A549 (cell line): ENCODE measurements at regions of chr7 and their contacts with region 1.

Region 1: GRCh38 chr7:74401137-74401859 is 52.4 kb upstream of the GTF2IRD1 start:
- DNase-seq: peak; percentile 66 to 72
- ATAC-seq: peak; percentile 74 to 87
- H3K4me3 ChIP-seq: no peak overlapping the region
- H3K27ac ChIP-seq: no peak overlapping the region
- H3K4me1 ChIP-seq: no peaks in the 10 kb centered on the region
- CTCF ChIP-seq: peak; percentile 92
- EP300 ChIP-seq: no peak
- POLR2A ChIP-seq: no peak
- RAD21 ChIP-seq: peak; percentile 94 to 96

Region 2: GRCh38 chr7:74068393-74069085 is 332.8 kb before region 1 on chr7:
- CTCF ChIA-PET with region 1: interaction called, 45 read pairs
- POLR2A ChIA-PET with region 1: interaction called, 6 read pairs
- DNase-seq: no peak
- ATAC-seq: no peak
- H3K4me3 ChIP-seq: no peak overlapping the region
- H3K27ac ChIP-seq: no peak overlapping the region
- H3K4me1 ChIP-seq: no peaks in the 10 kb centered on the region
- CTCF ChIP-seq: no peak
- EP300 ChIP-seq: no peak
- POLR2A ChIP-seq: no peak
- RAD21 ChIP-seq: no peak

Region 3: GRCh38 chr7:74231232-74231590 is 170.1 kb before region 1 on chr7:
- CTCF ChIA-PET with region 1: interaction called, 10 read pairs
- POLR2A ChIA-PET with region 1: no interaction called
- DNase-seq: no peak
- ATAC-seq: no peak
- H3K4me3 ChIP-seq: no peak overlapping the region
- H3K27ac ChIP-seq: no peak overlapping the region
- H3K4me1 ChIP-seq: no peaks in the 10 kb centered on the region
- CTCF ChIP-seq: no peak
- EP300 ChIP-seq: no peak
- POLR2A ChIP-seq: no peak
- RAD21 ChIP-seq: no peak

Region 4: DNA sequence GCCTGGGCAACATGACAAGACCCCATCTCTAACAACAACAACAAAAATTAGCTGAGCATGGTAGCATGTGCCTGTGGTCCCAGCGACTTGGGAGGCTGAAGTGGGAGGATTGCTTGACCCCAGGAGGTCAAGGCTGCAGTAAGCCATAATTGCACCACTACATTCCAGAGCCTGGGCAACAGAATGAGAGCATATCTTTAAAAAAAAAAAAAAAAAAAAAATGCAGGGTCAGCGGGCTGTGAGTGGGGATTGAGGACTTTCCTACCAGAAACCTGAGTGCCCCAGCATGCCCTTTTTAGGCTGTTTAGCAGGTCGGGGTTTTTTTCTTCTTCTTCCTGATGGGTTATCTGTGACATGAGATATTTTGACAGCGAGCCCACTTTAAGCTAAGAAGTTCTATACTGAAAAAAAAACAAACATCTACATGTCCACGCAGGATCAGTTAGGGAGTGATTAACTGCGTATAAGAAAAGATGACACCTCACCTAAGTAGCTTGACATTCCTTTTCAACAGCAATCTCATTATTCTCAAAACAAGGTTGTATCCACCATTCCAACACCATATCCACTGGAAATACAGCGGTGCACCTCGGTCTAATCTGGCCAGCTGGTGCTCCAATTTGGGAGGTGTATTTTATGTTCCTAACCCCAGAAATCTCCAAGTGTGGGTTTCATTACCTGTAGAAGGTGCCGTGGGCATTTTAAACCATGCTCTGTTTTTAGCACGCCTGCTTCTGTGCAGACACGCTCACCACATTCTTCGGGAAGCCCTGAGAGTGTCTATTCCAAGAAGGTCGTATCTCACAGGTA is 133.3 kb before region 1 on chr7:
- CTCF ChIA-PET with region 1: interaction called, 11 read pairs
- POLR2A ChIA-PET with region 1: no interaction called
- DNase-seq: no peak
- ATAC-seq: no peak
- H3K4me3 ChIP-seq: no peak overlapping the region
- H3K27ac ChIP-seq: no peak overlapping the region
- H3K4me1 ChIP-seq: peaks cover 14% of the 10 kb centered on the region
- CTCF ChIP-seq: no peak
- EP300 ChIP-seq: no peak
- POLR2A ChIP-seq: no peak
- RAD21 ChIP-seq: no peak

Region 5: GRCh38 chr7:74306730-74307469 is 94.4 kb before region 1 on chr7:
- CTCF ChIA-PET with region 1: interaction called, 10 read pairs
- POLR2A ChIA-PET with region 1: no interaction called
- DNase-seq: no peak
- ATAC-seq: peak; percentile 60 to 71
- H3K4me3 ChIP-seq: no peak overlapping the region
- H3K27ac ChIP-seq: peak overlapping the region; percentile 34 to 77; a peak in 4 of 6 replicates
- H3K4me1 ChIP-seq: peaks cover 27% of the 10 kb centered on the region
- CTCF ChIP-seq: no peak
- EP300 ChIP-seq: no peak
- POLR2A ChIP-seq: no peak
- RAD21 ChIP-seq: no peak

Region 6: DNA sequence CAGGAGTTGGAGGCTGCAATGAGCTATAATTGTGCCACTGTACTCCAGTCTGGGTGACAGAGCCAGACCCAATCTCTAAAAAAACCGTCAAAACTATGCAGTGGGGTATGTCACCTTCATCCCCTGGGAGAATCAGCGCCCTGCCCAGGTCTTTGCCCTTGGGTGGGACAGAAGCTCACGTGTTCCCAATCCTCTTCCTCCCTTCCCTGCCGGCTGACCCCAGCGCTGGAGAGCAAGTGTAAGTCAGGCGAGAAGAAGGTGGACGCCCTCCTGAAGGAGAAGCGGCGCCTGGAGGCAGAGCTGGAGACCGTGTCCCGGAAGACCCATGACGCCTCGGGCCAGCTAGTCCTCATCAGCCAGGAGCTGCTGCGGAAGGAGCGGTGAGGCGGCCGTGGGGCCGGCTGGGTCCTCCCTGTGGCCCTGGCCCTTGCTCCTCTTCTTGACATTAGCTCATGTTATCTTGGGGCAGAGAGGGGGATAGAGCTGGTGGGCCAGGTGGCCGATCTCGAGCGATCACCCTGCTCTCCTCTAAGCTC is 12.3 kb before region 1 on chr7:
- CTCF ChIA-PET with region 1: interaction called, 51 read pairs
- POLR2A ChIA-PET with region 1: no interaction called
- DNase-seq: no peak
- ATAC-seq: no peak
- H3K4me3 ChIP-seq: no peak overlapping the region
- H3K27ac ChIP-seq: no peak overlapping the region
- H3K4me1 ChIP-seq: 0 out of 3 replicates have a peak, but pooled peaks cover 6% of the 10 kb centered on the region
- CTCF ChIP-seq: no peak
- EP300 ChIP-seq: no peak
- POLR2A ChIP-seq: no peak
- RAD21 ChIP-seq: no peak

Region 7: DNA sequence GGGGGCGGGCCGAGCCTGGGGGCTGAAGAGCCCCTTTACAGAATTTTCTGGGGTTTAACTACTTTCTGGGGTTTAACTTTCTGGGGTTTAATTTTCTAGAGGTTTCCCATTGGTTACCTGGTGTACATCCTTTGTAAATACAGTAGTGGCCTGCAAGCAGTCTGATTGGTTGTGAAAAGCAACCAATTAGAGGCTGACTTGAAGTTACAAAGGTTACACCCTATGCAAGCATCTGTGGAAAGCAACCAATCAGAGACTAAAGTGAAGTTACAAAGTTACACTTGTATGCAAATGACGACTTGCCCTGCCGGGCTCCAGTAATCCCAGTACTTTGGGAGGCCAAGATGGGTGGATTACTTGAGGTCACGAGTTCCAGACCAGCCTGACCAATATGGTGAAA is 283.6 kb after region 1 on chr7:
- CTCF ChIA-PET with region 1: no interaction called
- POLR2A ChIA-PET with region 1: no interaction called
- DNase-seq: peak in 1 of 2 experiments; percentile 24
- ATAC-seq: 0 out of 6 replicates have a peak, but pooled peaks of 1 of the 2 experiments have one; percentile 31
- H3K4me3 ChIP-seq: no peak overlapping the region
- H3K27ac ChIP-seq: no peak overlapping the region
- H3K4me1 ChIP-seq: peaks cover 13% of the 10 kb centered on the region
- CTCF ChIP-seq: no peak
- EP300 ChIP-seq: no peak
- POLR2A ChIP-seq: no peak
- RAD21 ChIP-seq: no peak